ENCODE measurements at regions of chr3 and their contacts with region 1.

Region 1: DNA sequence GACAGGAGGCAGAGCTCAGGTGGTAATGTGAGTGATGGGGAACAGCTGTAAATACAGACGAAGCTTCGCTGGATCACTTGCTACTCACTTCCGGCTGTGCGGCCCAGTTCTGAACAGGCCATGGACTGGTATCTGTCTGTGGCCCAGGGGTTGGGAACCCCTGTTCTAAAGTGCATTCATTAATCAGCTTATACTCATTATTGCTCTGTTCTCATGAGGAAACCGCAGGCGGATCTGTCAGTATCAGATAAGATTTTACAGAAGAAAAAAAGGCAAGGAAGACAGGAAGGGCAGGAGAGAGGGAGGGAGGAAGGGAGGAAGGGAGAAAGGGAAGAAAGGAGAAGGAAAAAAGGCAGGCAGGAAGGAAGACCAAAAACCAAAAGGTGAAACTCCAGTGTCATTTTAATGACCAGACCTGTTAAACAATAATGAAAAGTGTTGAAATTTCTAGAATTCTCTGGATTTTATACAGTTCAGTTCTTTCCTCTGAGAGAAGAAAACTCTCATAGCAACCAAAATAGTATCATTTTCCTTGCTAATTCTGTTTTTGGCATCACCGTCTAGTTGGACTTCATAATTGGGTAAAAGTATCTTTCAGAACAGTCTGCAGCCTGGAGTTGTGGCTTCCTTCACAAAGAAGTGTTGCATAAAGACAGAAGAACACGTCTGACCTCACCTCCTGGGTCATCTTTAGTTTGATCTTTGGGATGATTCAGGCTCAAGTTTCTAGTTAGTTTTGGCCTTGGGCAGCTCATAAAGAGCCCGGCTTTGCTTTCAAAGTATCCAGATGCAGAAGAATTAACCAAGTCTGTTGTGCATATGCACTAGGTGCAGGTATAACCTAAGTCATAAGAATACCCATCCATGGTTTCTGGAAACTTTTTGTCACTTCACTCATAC is 128.1 kb upstream of the PROK2 start:
- DNase-seq: no peak
- ATAC-seq: no peak
- H3K4me3 ChIP-seq: no peak overlapping the region
- H3K4me3 Mint-ChIP-seq: no peak overlapping the region
- H3K27ac ChIP-seq: no peak overlapping the region
- H3K27ac Mint-ChIP-seq: no peak overlapping the region
- H3K4me1 ChIP-seq: no peaks in the 10 kb centered on the region
- H3K4me1 Mint-ChIP-seq: no peaks in the 10 kb centered on the region
- H3K27me3 ChIP-seq: peaks cover 0 to 3% of the 10 kb centered on the region in 2 experiments
- H3K27me3 Mint-ChIP-seq: peaks cover 4 to 10% of the 10 kb centered on the region in 2 donors

Region 2: GRCh38 chr3:72591522-72592421 is 678.7 kb after region 1 on chr3:
- CTCF ChIA-PET with region 1: no interaction called
- POLR2A ChIA-PET with region 1: no interaction called
- DNase-seq: no peak
- ATAC-seq: no peak
- H3K4me3 ChIP-seq: no peak overlapping the region
- H3K4me3 Mint-ChIP-seq: no peak overlapping the region
- H3K27ac ChIP-seq: no peak overlapping the region
- H3K27ac Mint-ChIP-seq: no peak overlapping the region
- H3K4me1 ChIP-seq: no peaks in the 10 kb centered on the region
- H3K4me1 Mint-ChIP-seq: peaks cover 0 to 7% (median 0%) of the 10 kb centered on the region in 3 donors
- H3K27me3 ChIP-seq: no peaks in the 10 kb centered on the region
- H3K27me3 Mint-ChIP-seq: no peaks in the 10 kb centered on the region

Region 3: DNA sequence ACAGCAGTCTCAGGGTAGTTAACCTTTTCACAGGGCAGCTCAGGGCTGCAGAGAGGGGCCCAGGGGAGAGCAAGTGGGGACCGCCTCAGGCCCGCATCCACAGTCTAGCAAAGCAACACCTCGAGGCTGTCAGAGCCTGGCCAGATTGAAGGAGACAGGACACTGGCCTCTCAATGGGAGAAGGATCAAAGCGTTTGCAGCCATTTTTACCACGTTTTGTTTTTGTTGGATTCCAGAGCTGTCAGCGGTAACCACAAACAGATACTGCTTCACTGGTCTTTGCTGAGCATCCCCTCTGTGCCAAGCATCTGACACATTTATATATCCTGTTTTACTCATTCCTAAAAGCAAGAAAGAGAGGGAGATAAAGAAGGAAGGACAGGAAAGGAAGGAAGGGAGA is 781.3 kb after region 1 on chr3:
- CTCF ChIA-PET with region 1: interaction called in 1 of 2 experiments, 11 read pairs
- POLR2A ChIA-PET with region 1: no interaction called
- DNase-seq: no peak
- ATAC-seq: peak in 1 of 4 experiments; percentile 24
- H3K4me3 ChIP-seq: no peak overlapping the region
- H3K4me3 Mint-ChIP-seq: no peak overlapping the region
- H3K27ac ChIP-seq: no peak overlapping the region
- H3K27ac Mint-ChIP-seq: no peak overlapping the region
- H3K4me1 ChIP-seq: no peaks in the 10 kb centered on the region
- H3K4me1 Mint-ChIP-seq: peaks cover 0 to 4% (median 0%) of the 10 kb centered on the region in 3 donors
- H3K27me3 ChIP-seq: peaks cover 0 to 7% of the 10 kb centered on the region in 2 experiments
- H3K27me3 Mint-ChIP-seq: no peaks in the 10 kb centered on the region

Measured in T-cell (primary cell).